Endothelial cell of umbilical vein (primary cell): ENCODE measurements at regions of chr20 and their contacts with region 1.

Region 1: GRCh38 chr20:462199-462991 is at the start of gene TBC1D20:
- DNase-seq: peak; percentile 85
- H3K4me3 ChIP-seq: peak within 1 kb of the TSS; percentile 55 to 70 (median 66)
- H3K27ac ChIP-seq: peak within 1 kb of the TSS; percentile 48
- H3K4me1 ChIP-seq: peaks cover 28% of the 10 kb centered on the region
- H3K27me3 ChIP-seq: no peaks in the 10 kb centered on the region
- CTCF ChIP-seq: peak in 1 of 2 donors; percentile 16
- POLR2A ChIP-seq: peak; percentile 75
- total RNA-seq, gene TBC1D20: 30.6 and 34.3 TPM in 2 replicates

Region 2: DNA sequence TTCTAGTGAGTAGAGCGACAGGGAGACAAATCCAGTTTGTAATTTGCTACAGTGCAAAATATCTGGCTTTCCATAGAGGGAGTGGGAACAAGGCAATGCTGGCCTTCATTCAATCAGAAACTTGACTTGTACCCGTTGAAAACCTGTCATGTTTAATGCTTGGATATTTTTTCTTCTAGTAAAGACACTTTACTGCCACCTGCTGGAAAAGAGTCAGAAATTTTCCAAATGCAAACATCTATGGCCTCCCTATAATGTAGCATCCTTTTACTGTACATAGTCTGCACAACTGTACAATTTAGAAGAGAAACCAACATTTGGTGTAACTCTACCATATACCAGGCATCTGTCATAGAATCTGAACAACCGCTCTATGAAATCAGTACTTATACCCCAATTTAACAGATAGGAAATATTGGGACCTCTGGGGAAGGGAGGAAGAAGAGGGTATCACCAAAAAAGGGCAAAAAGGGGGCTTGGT is 16.6 kb after region 1 on chr20:
- CTCF ChIA-PET with region 1: interaction called, 4 read pairs
- POLR2A ChIA-PET with region 1: no interaction called
- dilution Hi-C with region 1: no loop called
- intact Hi-C with region 1: loop called (anchors 1 kb)
- DNase-seq: peak; percentile 70
- H3K4me3 ChIP-seq: no peak overlapping the region
- H3K27ac ChIP-seq: no peak overlapping the region
- H3K4me1 ChIP-seq: peaks cover 7% of the 10 kb centered on the region
- H3K27me3 ChIP-seq: no peaks in the 10 kb centered on the region
- CTCF ChIP-seq: peak; percentile 21 to 40
- POLR2A ChIP-seq: no peak